ENCODE measurements at regions of chr16 and their contacts with region 1.

Region 1: DNA sequence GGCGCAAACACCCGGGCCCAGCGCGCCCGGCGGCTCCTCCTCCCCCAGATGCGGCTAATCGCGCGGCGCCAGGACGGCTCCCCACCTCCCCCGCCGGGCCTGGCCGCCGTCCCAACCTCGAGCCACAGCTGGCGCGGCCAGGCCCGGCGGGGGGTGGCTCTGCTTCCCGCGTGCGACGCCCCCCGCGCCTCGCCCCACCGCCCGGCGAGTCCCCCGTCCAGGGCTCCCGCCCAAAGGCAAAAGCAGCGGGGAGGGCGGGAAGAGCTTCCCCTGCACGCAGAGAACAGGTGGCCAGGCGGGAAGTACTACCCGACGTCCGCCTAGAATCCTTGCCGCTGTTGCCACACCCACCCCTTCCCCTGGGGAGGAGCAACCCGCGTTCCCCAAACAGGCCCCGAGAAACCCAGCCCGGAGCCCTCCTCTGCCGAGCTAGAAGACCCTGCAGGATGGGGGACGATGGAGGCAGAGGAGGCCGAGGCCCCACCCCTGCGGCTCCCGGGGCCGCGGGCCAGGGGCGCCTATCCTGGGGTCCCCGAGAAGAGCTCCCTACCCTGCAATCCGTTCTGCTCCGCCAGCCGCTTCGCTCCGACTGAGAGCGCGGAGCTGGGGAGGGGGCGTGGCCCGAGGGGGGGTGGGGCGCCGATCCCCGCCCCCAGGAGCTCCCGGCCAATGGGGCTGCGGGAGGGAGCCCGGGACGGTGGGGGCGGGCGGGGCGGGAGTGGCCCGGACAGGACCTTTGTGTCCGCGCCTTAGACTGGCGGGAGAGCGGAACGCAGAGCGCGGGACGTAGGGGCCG is at the start of gene CARHSP1:
- DNase-seq: peak; percentile 87
- H3K4me3 ChIP-seq: peak within 1 kb of the TSS; percentile 54 to 56
- H3K27ac ChIP-seq: peak within 1 kb of the TSS; percentile 66 to 78
- H3K4me1 ChIP-seq: peaks cover 11% of the 10 kb centered on the region
- H3K27me3 ChIP-seq: no peaks in the 10 kb centered on the region
- CTCF ChIP-seq: peak in 1 of 4 experiments; percentile 7
- POLR2A ChIP-seq: peak; percentile 89
- total RNA-seq, gene CARHSP1: 51.0 to 146 TPM

Region 2: DNA sequence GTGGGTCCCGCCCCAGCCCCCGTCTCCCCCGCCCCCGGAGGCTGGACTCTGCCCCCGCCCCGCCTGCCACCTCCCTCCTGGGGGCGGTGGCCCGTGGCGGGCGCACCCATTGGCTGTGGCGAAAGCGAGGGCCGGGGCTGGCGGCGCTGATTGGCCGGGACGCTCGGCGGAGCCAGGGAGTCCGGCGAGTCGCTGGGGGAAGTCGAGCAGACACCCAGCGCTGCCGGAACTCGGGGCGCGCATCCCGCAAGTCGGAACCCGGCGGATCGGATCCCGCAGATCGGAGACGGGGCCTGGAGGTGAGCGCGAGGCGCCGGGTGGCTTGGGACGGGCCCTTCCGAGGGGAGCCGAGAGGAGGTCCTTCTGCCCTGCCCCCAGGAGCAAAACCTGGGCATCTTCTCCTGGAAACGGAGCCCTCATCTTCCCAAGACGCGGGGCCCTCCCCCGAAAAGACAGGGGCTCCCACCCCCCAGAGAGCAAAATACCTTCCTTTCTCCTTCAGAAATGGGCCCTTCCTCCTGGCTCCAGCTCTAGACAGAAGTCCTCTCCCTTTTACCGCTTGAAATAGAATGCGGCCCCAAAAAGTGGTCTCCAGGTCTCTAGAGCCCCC is 194.1 kb before region 1 on chr16 and contains the start of gene ABAT:
- intact Hi-C with region 1: loop called (anchors 5 kb)
- DNase-seq: peak; percentile 95
- H3K4me3 ChIP-seq: peak within 1 kb of the TSS; percentile 63 to 73
- H3K27ac ChIP-seq: peak within 1 kb of the TSS; percentile 28 to 73
- H3K4me1 ChIP-seq: no peaks in the 10 kb centered on the region
- H3K27me3 ChIP-seq: no peaks in the 10 kb centered on the region
- CTCF ChIP-seq: no peak
- POLR2A ChIP-seq: peak; percentile 83
- total RNA-seq, gene ABAT: 67.4 to 74.7 TPM

Region 3: DNA sequence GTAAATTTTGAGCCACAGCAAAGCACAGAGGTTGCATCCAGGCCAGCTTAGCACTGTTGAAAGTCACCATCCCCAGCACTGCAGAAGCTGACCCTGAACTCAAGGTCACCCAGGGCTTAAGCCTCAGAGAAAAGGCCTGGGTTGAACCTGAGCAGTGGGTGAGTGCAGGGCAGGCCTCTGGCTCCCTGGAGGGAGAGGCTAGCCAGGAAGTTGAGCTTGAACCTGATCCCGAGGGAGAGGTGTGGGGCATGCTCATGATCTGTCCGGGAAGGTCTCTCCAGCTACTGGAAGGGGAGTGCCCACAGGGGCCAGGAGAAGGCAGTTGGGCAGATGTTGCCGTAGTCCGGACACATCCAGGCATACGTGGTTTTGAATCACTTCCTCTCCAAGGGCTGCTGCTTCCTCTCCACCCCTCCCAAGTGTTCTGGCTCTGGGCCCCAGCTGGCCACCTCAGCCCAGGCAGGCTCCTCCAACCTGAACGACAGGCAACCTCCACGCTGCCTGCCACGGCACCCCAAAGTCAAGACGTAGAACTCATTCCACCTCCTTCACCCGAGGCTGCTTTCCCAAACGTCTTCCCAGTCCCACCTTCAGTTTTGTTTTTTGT is 18.2 kb before region 1 on chr16:
- intact Hi-C with region 1: no loop called
- DNase-seq: no peak
- H3K4me3 ChIP-seq: no peak overlapping the region
- H3K27ac ChIP-seq: no peak overlapping the region
- H3K4me1 ChIP-seq: no peaks in the 10 kb centered on the region
- H3K27me3 ChIP-seq: no peaks in the 10 kb centered on the region
- CTCF ChIP-seq: no peak
- POLR2A ChIP-seq: no peak

Region 4: GRCh38 chr16:8905168-8905762 is 36.7 kb after region 1 on chr16:
- intact Hi-C with region 1: no loop called
- DNase-seq: no peak
- H3K4me3 ChIP-seq: no peak overlapping the region
- H3K27ac ChIP-seq: no peak overlapping the region
- H3K4me1 ChIP-seq: no peaks in the 10 kb centered on the region
- H3K27me3 ChIP-seq: no peaks in the 10 kb centered on the region
- CTCF ChIP-seq: peak in 1 of 4 experiments; percentile 25
- POLR2A ChIP-seq: no peak

Measured in prostate gland (tissue), 2 donors.